ENCODE measurements at regions of chr13 and their contacts with region 1.

Region 1: DNA sequence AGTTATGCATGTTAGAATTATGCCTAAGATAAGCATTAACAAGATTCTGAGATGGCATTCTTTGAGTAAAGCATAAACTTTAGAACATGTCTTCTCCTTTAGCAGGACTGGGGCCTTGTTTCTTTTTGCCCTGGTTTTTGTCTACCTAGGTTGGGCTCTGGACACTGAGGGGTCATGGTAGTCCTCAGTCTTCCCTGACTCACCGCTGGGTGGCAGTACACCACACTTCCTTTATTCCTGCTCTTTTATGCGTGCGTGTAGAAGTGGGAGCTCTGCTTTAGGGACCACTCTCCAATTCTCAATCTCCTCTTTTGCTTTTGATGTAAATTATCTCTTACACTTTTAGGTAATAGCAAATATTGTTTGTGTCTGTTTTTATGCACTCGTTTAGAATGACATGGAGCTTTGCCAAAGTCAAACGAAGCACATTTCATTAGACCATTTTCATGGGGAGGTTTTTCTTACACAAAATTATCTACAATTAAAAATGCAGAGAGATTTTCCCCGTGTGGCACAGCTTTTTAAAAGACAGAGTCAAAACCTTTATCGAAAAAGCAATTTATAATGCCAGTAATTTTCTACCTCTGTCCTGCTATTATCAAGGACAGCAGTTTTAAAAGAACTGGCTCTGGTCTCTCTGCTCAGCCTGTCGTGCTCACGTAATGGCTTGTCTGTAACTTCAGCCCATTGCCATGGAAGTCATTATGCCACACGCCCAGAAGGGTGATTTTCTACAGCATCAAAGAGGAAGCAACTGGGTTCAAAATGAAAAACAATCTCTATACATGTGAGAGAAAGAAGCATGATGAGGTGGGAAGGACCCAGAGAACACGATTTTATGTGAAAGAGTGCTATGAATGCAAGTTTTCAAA is 413.9 kb downstream of the COG6 start:
- DNase-seq: peak; percentile 77
- ATAC-seq: peak; percentile 90
- H3K4me3 Mint-ChIP-seq: no peak overlapping the region
- H3K27ac Mint-ChIP-seq: no peak overlapping the region
- H3K4me1 Mint-ChIP-seq: peaks cover 25% of the 10 kb centered on the region
- H3K27me3 Mint-ChIP-seq: no peaks in the 10 kb centered on the region

Region 2: GRCh38 chr13:40211589-40211974 is 142.2 kb after region 1 on chr13:
- CTCF ChIA-PET with region 1: interaction called, 12 read pairs
- POLR2A ChIA-PET with region 1: no interaction called
- DNase-seq: no peak
- ATAC-seq: no peak
- H3K4me3 Mint-ChIP-seq: no peak overlapping the region
- H3K27ac Mint-ChIP-seq: no peak overlapping the region
- H3K4me1 Mint-ChIP-seq: peaks cover 26% of the 10 kb centered on the region
- H3K27me3 Mint-ChIP-seq: no peaks in the 10 kb centered on the region